ENCODE measurements at regions of chr19 and their contacts with region 1.

Region 1: DNA sequence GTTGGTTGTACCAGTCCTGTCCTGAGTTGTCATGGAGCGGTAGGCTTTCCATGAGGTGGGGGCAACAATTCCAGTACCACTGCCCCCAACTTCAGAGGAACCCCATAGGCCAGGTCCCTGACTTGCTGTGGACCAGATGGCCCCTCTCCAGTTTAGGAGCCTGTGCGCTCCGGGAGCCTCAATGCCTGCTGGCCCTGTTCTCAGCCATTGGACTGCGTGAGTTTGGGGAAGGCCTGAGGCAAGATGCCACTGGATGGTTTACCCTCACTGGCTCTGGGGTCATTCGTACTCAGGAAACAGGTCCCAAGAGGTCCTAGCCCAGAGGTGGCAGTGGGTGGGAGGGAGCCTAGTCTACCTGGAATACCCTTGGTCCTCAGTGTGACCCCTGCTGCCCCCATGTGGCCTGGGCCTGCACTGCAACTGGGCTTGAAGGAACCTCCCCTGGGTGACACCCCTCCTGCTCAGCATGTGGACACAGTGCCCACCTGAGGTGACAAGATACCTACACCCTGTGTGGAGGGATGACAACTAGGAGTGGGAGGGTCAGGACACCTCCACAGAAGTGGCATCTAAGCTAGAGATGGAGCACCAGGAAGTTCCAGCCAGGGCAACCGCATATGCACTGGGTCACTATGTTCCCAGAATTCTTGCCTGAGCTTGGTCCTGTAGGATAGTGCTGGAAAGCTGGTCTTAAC is 6.0 kb upstream of the PRR19 start:
- DNase-seq: peak; percentile 90 to 91
- ATAC-seq: peak; percentile 90 to 98 (median 90)
- H3K4me3 ChIP-seq: no peak overlapping the region
- H3K4me3 Mint-ChIP-seq: no peak overlapping the region
- H3K27ac ChIP-seq: no peak overlapping the region
- H3K27ac Mint-ChIP-seq: no peak overlapping the region
- H3K4me1 ChIP-seq: no peaks in the 10 kb centered on the region
- H3K4me1 Mint-ChIP-seq: peaks cover 0 to 12% of the 10 kb centered on the region in 2 donors
- H3K27me3 ChIP-seq: no peaks in the 10 kb centered on the region
- H3K27me3 Mint-ChIP-seq: no peaks in the 10 kb centered on the region
- CTCF ChIP-seq: peak; percentile 92

Region 2: DNA sequence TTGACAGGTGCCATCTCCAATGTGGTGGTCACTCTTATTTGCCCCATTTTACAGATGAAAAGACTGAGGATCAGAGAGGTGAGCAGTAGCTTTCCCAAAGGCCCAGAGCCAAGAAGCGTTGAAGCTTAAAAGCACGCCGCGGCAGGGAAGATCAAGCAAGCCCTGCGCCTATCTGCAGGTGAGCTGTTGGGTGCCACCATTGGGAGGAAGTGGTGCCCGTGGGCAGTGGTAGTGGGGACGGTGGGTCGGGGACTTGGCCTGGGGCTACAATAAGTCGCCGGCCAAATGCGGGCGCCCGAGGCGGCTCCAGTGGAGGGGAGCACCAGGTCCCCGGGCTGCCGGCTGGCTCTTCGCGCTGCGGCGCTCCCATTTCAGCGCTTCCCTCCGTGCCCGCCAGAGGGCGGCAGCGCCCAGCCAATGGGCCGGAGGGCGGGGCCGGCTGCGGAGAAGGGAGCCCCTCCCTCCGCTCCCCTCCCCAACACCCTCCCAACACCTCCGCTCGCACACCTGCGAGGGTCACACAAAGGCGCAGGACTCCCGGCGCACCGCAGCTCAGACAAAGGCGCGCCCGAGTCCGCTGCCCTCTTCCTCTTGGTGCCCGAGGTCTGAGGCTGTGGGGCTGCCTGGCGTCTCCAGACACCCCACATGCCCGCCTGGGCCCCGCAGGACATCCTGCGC is 163.0 kb before region 1 on chr19:
- intact Hi-C with region 1: loop called (anchors 1 kb)
- DNase-seq: peak; percentile 83 to 92
- ATAC-seq: peak; percentile 74 to 86 (median 77)
- H3K4me3 ChIP-seq: peak overlapping the region; percentile 73
- H3K4me3 Mint-ChIP-seq: peak overlapping the region; percentile 80
- H3K27ac ChIP-seq: peak overlapping the region; percentile 49
- H3K27ac Mint-ChIP-seq: peak overlapping the region; percentile 58 to 86
- H3K4me1 ChIP-seq: peaks cover 73% of the 10 kb centered on the region
- H3K4me1 Mint-ChIP-seq: peaks cover 36 to 73% of the 10 kb centered on the region in 2 donors
- H3K27me3 ChIP-seq: no peaks in the 10 kb centered on the region
- H3K27me3 Mint-ChIP-seq: no peaks in the 10 kb centered on the region
- CTCF ChIP-seq: peak; percentile 100

Region 3: GRCh38 chr19:42176990-42177685 is 118.8 kb before region 1 on chr19:
- intact Hi-C with region 1: loop called (anchors 5 kb)
- DNase-seq: peak; percentile 63 to 89
- ATAC-seq: peak; percentile 89 to 94 (median 92)
- H3K4me3 ChIP-seq: peak overlapping the region; percentile 42
- H3K4me3 Mint-ChIP-seq: no peak overlapping the region
- H3K27ac ChIP-seq: no peak overlapping the region
- H3K27ac Mint-ChIP-seq: no peak overlapping the region
- H3K4me1 ChIP-seq: peaks cover 18% of the 10 kb centered on the region
- H3K4me1 Mint-ChIP-seq: peaks cover 11 to 22% of the 10 kb centered on the region in 2 donors
- H3K27me3 ChIP-seq: peaks cover 36% of the 10 kb centered on the region
- H3K27me3 Mint-ChIP-seq: peaks cover 7 to 14% of the 10 kb centered on the region in 2 donors
- CTCF ChIP-seq: peak; percentile 29

Region 4: DNA sequence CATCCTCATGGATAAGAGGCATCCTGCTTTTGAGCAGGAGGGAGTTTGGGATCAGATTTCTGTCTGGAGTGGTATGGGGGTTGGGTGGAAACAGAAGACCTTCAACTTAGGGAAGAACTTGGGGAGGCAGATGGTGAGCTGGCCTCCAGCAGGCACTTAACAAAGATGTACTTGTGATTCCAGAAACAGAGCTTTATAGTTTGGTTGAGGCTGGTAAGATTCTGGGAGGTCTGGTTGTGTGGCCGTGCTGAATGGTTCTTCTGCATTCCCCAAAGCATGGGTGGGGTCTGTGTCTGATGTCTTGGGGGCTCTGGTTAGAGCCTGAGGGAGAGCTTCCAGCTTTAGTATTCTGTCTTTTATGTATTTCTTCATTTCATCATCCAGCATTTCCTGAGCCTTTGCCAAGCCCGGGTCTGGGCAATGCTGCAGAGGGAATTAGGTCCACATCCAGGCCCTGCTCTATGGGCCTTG is 34.3 kb after region 1 on chr19:
- intact Hi-C with region 1: no loop called
- DNase-seq: no peak
- ATAC-seq: no peak
- H3K4me3 ChIP-seq: no peak overlapping the region
- H3K4me3 Mint-ChIP-seq: no peak overlapping the region
- H3K27ac ChIP-seq: no peak overlapping the region
- H3K27ac Mint-ChIP-seq: no peak overlapping the region
- H3K4me1 ChIP-seq: peaks cover 11% of the 10 kb centered on the region
- H3K4me1 Mint-ChIP-seq: peaks cover 10 to 22% of the 10 kb centered on the region in 2 donors
- H3K27me3 ChIP-seq: no peaks in the 10 kb centered on the region
- H3K27me3 Mint-ChIP-seq: peaks cover under 1% of the 10 kb centered on the region in 2 donors
- CTCF ChIP-seq: no peak